ENCODE measurements at regions of chr9 and their contacts with region 1.

Region 1: DNA sequence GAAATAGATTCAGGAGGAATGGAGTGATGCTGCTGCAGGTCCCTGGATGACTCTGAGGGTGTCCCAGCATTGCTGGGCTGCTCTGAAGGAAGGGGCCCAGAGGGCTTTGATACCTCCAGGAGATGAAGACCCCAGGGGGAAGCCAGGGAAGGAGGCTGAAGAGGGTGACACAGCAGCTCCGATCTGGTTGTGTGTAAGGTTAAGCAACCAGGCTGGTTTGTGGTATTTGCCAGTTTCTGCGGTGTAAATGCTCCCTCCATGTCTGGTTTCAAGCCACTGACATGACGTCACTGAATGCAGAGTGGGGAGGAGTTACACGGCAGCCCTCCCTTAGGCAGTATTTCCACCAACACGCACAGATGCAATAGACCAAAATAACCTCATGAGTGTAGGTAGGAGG is 40.0 kb upstream of the ORM1 start:
- DNase-seq: peak; percentile 75
- H3K4me3 ChIP-seq: no peak overlapping the region
- H3K27ac ChIP-seq: peak overlapping the region; percentile 73
- H3K27me3 ChIP-seq: no peaks in the 10 kb centered on the region
- CTCF ChIP-seq: no peak

Region 2: GRCh38 chr9:112680731-112681402 is 1602.1 kb before region 1 on chr9:
- CTCF ChIA-PET with region 1: no interaction called
- POLR2A ChIA-PET with region 1: interaction called, 14 read pairs
- DNase-seq: no peak
- H3K4me3 ChIP-seq: no peak overlapping the region
- H3K27ac ChIP-seq: no peak overlapping the region
- H3K27me3 ChIP-seq: no peaks in the 10 kb centered on the region
- CTCF ChIP-seq: no peak

Region 3: DNA sequence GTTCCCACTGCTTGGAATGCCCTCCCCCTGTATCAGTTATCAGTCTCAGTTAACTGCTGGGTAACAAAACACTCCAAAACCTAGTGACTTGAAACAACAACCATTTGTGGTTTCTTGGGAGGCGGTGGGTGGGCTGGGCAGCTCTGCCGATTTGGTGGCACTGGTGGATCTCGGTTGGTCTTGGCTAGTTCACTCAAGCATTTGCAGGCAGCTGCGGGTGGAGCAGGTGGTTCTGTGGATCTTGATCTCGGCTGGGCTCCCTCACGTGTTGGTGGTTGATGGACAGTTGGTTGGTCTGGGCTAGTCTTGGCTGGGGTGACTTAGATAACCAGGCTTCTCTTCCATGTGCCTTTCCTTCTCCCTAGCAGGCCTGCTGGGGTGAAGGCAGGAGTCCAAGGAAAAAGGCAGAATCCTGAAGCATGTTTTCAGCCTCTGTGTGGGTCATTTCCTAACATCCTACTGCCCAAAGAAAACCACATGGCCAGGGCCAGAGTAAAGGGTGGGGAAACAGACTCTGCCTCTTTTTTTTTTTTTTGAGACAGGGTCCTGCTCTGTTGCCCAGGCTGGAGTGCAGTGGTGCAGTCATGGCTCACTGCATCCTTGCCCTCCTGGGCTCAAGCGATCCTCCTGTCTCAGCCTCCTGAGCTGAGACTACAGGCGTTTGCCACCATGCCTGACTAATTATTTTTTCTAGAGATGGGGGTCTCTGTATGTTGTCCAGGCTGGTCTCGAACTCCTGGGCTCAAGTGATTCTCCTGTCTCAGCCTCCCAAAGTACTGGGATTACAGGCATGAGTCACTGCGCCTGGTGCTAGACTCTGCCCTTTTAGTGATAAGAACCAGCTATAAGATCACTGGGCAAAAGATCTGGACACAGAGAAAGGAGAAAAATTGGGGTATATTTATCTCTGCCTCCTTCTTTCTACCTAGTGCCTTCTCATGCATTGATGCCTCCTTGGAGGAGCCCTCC is 635.7 kb before region 1 on chr9:
- CTCF ChIA-PET with region 1: no interaction called
- POLR2A ChIA-PET with region 1: no interaction called
- DNase-seq: no peak
- H3K4me3 ChIP-seq: no peak overlapping the region
- H3K27ac ChIP-seq: no peak overlapping the region
- H3K27me3 ChIP-seq: no peaks in the 10 kb centered on the region
- CTCF ChIP-seq: no peak

Region 4: DNA sequence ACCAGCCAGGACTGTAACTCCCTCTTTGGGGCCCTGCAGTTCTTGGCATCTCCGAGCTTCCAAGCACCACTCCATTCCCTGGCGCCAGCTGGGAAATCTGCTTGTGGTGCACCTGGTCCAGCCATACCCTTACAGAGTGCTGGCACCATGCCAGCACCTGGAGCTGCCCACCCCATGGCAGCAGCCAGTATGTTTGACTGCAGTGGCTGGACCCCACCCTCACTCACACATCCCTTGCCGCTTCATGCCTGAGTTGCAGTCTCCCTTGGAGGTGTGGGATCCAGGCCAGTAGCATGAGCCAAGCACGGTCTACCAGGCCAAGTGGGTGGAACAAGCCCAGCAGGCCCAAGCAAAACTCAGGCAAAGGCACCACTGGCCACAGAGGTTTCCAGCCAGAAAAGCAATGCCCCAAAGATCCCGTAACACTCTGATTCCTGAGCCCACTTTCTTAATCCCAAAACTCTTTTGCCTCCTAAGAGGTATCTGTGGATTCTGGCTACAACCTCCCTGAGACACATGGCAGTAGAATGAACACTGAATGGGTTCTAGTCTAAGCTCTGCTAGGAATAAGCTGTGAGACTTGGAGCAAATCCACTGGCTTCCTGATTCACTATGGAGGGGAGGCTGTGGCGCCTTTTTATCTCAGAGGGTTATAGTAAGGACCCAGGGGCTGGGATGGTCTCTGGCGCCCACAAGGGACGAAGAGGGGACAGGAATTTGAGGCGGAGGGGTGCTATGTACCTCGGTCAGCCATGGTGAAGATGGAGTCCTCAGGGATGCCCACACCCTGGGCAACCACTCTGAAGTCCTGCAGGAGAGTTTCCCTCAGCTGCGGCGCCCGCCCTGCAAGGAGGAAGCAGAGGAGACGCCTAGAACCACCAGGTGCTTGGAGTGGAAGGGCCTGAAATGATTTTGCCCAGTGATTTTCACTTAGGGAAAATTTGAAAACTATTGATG is 210.5 kb before region 1 on chr9:
- CTCF ChIA-PET with region 1: no interaction called
- POLR2A ChIA-PET with region 1: no interaction called
- DNase-seq: no peak
- H3K4me3 ChIP-seq: no peak overlapping the region
- H3K27ac ChIP-seq: no peak overlapping the region
- H3K27me3 ChIP-seq: peaks cover 36% of the 10 kb centered on the region
- CTCF ChIP-seq: no peak